ENCODE measurements at regions of chrX and their contacts with region 1.

Region 1: DNA sequence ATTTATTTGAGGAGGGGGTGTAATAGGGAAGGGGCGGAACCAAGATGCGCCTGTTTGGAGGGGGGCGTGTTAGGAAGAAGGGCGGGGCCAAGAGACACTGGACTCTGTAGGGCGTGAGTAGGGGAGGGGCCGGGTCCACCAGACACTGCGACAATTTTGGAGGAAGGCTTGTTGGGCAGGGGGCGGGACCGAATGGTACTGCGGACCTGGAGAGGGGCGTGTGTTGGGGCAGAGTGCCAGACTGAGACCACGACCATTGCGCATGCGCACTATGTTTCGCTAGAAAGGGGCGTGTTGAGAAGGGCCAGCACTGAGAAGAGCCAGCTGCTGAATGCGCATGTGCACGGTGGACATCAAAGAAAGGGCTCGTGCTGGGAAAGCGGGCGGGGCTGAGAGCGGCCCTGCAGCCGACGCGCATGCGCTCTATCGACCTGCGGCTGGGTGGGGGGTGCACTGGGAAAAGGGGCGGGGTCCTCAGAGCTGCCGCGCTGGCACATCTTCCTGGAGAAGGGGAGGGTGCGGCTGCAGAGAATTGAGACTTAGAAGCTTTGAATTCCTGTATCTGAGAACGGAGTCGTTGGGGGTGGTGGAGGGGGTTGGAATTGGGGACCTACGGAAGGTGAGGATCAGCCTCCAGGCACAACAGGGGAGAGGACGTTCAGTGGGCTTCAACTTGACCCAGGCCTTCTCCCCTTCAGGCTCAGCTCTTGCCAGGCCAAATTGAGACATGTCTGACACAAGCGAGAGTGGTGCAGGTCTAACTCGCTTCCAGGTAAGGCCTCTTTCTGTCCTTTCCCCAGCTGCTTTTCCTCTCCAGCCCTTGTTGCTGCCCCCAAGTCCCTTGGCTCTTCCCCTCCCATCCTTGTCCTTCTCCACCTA is 1.3 kb downstream of the MAGED2 start:
- H3K4me3 ChIP-seq: peak overlapping the region; percentile 52
- H3K27ac ChIP-seq: peak overlapping the region; percentile 84
- H3K4me1 ChIP-seq: no peaks in the 10 kb centered on the region
- CTCF ChIP-seq: no peak; the same call in 1 of the 2 replicates

Region 2: GRCh38 chrX:54615109-54615508 is 193.7 kb before region 1 on chrX:
- CTCF ChIA-PET with region 1: no interaction called
- POLR2A ChIA-PET with region 1: no interaction called
- H3K4me3 ChIP-seq: no peak overlapping the region
- H3K27ac ChIP-seq: no peak overlapping the region
- H3K4me1 ChIP-seq: no peaks in the 10 kb centered on the region
- CTCF ChIP-seq: no peak

Region 3: GRCh38 chrX:54639346-54640102 is 169.3 kb before region 1 on chrX:
- CTCF ChIA-PET with region 1: interaction called, 4 read pairs
- POLR2A ChIA-PET with region 1: interaction called, 14 read pairs
- H3K4me3 ChIP-seq: peak overlapping the region; percentile 29
- H3K27ac ChIP-seq: peak overlapping the region; percentile 88
- H3K4me1 ChIP-seq: no peaks in the 10 kb centered on the region
- CTCF ChIP-seq: peak; percentile 77

Region 4: GRCh38 chrX:54865208-54865607 is 56.4 kb after region 1 on chrX:
- CTCF ChIA-PET with region 1: no interaction called
- POLR2A ChIA-PET with region 1: no interaction called
- H3K4me3 ChIP-seq: no peak overlapping the region
- H3K27ac ChIP-seq: no peak overlapping the region
- H3K4me1 ChIP-seq: no peaks in the 10 kb centered on the region
- CTCF ChIP-seq: no peak

Region 5: DNA sequence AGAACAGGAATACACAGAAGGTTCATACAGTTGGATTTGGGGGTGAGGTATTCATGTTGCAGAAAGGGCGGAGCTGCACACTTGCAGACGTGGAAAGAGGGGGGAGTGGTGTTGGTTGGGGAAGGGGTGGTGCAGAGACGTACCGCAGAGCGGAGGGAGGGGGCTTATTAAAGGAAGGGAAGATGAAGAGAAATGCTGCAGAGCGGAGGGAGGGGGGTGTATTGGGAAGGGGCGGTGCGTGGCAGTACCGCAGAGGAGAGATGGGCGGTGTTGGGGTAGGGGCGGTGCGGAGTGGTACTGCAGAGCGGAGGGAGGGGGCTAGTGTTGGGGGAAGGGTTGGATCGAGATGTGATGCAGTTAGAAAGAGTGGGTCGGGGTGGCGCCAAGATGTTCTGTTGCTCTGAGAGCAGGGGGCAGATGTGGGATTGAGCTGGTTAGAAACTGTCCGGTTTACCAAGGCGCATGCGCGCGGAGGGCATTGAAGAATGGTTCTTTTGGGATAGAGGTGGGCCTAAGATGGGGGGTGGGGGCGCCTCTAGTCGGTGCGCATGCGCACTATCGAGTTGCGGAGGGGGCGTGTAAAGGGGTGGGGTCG is 112.7 kb after region 1 on chrX:
- CTCF ChIA-PET with region 1: no interaction called
- POLR2A ChIA-PET with region 1: interaction called, 12 read pairs
- H3K4me3 ChIP-seq: peak overlapping the region; percentile 52
- H3K27ac ChIP-seq: no peak overlapping the region
- H3K4me1 ChIP-seq: no peaks in the 10 kb centered on the region
- CTCF ChIP-seq: no peak; the same call in 1 of the 2 replicates

Measured in HEK293 (cell line).